Activated CD8-positive, alpha-beta T cell treated with anti-CD3 and anti-CD28 coated beads, Interleukin-2, amount 10 ng/mL, durations not matched to agents 7 days and 5 days (primary cell): ENCODE measurements at regions of chr19 and their contacts with region 1.

Region 1: DNA sequence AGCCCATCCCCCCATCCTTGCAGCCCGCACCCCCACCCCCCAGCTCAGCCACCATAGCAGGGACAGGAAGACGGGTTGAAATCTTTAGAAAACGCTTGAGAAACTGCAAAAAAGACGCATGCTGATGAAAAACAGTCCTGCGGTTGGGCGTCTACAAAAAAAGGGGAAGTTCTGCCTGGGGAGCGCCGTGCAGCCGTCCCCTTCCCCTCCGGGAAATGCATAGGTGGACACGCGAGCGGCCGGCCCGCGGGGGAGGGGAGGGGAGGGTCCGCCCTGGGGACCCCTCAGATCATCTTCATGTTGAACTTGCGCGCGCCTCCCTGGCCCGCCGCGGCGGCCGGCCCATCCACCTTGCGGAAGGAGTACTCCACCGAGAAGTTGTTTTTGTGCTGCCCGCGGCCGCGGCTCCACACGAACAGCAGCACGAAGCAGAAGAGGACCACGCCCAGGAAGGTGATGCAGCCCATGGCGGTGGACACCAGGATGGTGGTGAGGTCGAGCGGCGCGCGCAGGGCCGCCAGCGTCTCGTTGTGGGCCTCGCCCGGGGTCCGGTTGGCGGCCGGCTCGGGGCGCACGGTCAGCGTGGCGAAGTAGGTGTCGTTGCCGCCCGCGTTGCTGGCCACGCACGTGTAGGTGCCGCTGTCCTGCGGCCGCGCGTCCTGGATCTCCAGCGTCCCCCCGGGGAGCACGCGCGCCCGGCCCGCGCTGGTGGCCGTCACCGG is 7.9 kb upstream of the PEAK3 start:
- DNase-seq: peak; percentile 82
- ATAC-seq: peak; percentile 81
- H3K4me3 Mint-ChIP-seq: peak overlapping the region; percentile 85
- H3K27ac Mint-ChIP-seq: peak overlapping the region; percentile 97
- H3K4me1 Mint-ChIP-seq: peaks cover 39% of the 10 kb centered on the region
- H3K27me3 Mint-ChIP-seq: peaks cover 5% of the 10 kb centered on the region

Region 2: DNA sequence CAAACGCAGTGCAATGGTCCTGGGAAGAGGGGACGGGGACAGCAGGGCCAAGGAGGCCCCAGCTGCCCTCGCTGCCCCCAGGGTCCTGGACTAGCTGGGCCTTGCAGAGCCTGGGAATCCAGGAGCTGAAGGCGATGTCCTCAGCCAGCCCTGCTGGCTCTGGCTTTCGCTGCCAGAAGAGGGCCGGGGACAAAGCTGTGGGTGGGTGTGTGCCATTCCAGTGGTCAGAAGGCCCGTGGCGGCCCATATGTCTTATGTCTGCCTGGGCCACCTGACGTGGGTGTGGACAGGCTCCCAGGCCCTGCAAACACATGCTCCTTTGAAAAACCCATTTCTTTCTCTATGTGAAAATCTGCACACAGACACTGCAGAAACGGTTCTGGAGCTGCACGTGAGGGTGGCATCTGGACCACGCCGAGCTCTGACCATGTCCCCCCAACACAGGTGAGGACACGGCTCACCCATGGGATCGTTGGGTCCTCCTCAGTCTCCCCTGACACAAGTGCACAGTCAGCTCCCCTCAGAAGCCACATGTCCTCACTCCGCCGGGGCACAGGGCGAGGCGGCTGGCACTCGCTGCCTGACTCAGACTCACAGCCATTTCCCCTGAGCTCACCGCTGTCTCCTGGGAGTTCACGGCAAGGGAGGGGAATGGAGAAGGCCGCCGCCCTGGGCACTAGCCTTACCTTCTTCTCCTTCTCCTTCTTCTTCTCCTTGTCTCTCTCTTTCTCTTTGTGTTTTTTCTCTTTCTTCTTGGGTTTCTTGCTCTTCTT is 176.2 kb before region 1 on chr19:
- CTCF ChIA-PET with region 1: no interaction called
- POLR2A ChIA-PET with region 1: no interaction called
- DNase-seq: no peak
- ATAC-seq: no peak
- H3K4me3 Mint-ChIP-seq: no peak overlapping the region
- H3K27ac Mint-ChIP-seq: no peak overlapping the region
- H3K4me1 Mint-ChIP-seq: peaks cover 9% of the 10 kb centered on the region
- H3K27me3 Mint-ChIP-seq: no peaks in the 10 kb centered on the region

Region 3: GRCh38 chr19:2269244-2269947 is 20.5 kb before region 1 on chr19:
- CTCF ChIA-PET with region 1: interaction called, 15 read pairs
- POLR2A ChIA-PET with region 1: interaction called, 6 read pairs
- DNase-seq: peak; percentile 99
- ATAC-seq: peak; percentile 78
- H3K4me3 Mint-ChIP-seq: peak overlapping the region; percentile 88
- H3K27ac Mint-ChIP-seq: peak overlapping the region; percentile 88
- H3K4me1 Mint-ChIP-seq: peaks cover 45% of the 10 kb centered on the region
- H3K27me3 Mint-ChIP-seq: no peaks in the 10 kb centered on the region

Region 4: GRCh38 chr19:2333807-2334211 is 43.9 kb after region 1 on chr19:
- CTCF ChIA-PET with region 1: no interaction called
- POLR2A ChIA-PET with region 1: no interaction called
- DNase-seq: no peak
- ATAC-seq: no peak
- H3K4me3 Mint-ChIP-seq: no peak overlapping the region
- H3K27ac Mint-ChIP-seq: peak overlapping the region; percentile 63
- H3K4me1 Mint-ChIP-seq: peaks cover 46% of the 10 kb centered on the region
- H3K27me3 Mint-ChIP-seq: no peaks in the 10 kb centered on the region